Esophagus muscularis mucosa (tissue), 4 donors: ENCODE measurements at regions of chr12 and their contacts with region 1.

Region 1: GRCh38 chr12:69570545-69571399 is 14.5 kb upstream of the CCT2 start:
- DNase-seq: no peak
- H3K4me3 ChIP-seq: no peak overlapping the region
- H3K27ac ChIP-seq: no peak overlapping the region
- H3K4me1 ChIP-seq: peaks cover 0 to 5% (median 0%) of the 10 kb centered on the region in 4 donors
- H3K27me3 ChIP-seq: no peaks in the 10 kb centered on the region
- CTCF ChIP-seq: peak; percentile 75 to 85 (median 84)
- EP300 ChIP-seq: no peak
- POLR2A ChIP-seq: no peak

Region 2: GRCh38 chr12:69196302-69197288 is 374.2 kb before region 1 on chr12:
- intact Hi-C with region 1: no loop called
- DNase-seq: no peak
- H3K4me3 ChIP-seq: no peak overlapping the region
- H3K27ac ChIP-seq: no peak overlapping the region
- H3K4me1 ChIP-seq: no peaks in the 10 kb centered on the region
- H3K27me3 ChIP-seq: no peaks in the 10 kb centered on the region
- CTCF ChIP-seq: peak in 1 of 3 experiments; percentile 12
- EP300 ChIP-seq: no peak
- POLR2A ChIP-seq: no peak

Region 3: GRCh38 chr12:69243099-69244084 is 327.4 kb before region 1 on chr12:
- intact Hi-C with region 1: no loop called
- DNase-seq: no peak
- H3K4me3 ChIP-seq: no peak overlapping the region
- H3K27ac ChIP-seq: no peak overlapping the region
- H3K4me1 ChIP-seq: peaks cover 43 to 84% (median 74%) of the 10 kb centered on the region in 4 donors
- H3K27me3 ChIP-seq: no peaks in the 10 kb centered on the region
- CTCF ChIP-seq: no peak
- EP300 ChIP-seq: no peak
- POLR2A ChIP-seq: no peak

Region 4: DNA sequence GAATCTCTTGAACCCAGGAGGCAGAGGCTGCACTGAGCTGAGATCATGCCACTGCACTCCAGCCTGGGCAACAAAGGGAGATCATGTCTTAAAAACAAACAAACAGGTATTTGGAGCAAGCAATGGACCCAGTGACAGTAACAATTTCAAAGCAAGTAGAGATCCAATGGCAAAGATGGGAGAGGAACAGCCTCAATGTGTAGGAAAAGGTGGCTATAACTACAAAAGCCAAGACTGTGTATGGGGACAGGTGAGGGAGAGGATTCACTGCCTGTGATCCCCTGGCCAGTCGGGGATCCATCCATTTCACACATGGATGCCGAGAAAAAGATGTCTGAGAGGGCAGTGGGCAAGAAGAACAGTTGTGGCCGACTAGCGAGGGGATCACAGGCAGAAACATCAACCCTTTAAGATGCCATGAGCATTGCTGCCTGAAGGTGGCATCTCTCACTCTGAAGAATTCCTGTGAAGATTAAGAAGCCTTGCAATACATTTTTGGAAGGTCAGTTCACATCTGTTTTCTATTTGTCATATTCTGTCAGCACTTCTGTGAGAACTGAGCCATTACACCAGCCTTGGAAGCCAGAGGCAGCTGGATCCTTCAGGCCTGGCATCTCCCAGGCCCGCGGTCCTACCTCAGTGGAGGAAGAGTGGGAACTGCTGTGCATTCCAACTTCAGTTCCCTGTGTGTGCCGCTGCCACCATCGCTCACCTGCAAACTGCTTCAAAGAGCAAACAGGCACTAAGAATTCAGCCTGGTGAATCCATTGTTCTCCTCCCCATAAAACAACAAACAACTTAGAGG is 155.1 kb before region 1 on chr12:
- intact Hi-C with region 1: loop called (anchors 5 kb)
- DNase-seq: no peak
- H3K4me3 ChIP-seq: peak overlapping the region in 3 of 4 donors; percentile 11 to 20 (median 17)
- H3K27ac ChIP-seq: peak overlapping the region; percentile 34 to 59 (median 42)
- H3K4me1 ChIP-seq: peaks cover 10 to 15% (median 12%) of the 10 kb centered on the region in 4 donors
- H3K27me3 ChIP-seq: no peaks in the 10 kb centered on the region
- CTCF ChIP-seq: peak; percentile 73 to 85 (median 85)
- EP300 ChIP-seq: no peak
- POLR2A ChIP-seq: no peak

Region 5: GRCh38 chr12:69765515-69765914 is 194.7 kb after region 1 on chr12:
- intact Hi-C with region 1: no loop called
- DNase-seq: no peak
- H3K4me3 ChIP-seq: no peak overlapping the region
- H3K27ac ChIP-seq: no peak overlapping the region
- H3K4me1 ChIP-seq: no peaks in the 10 kb centered on the region
- H3K27me3 ChIP-seq: no peaks in the 10 kb centered on the region
- CTCF ChIP-seq: no peak
- EP300 ChIP-seq: no peak
- POLR2A ChIP-seq: no peak